ENCODE measurements at regions of chr17 and their contacts with region 1.

Region 1: DNA sequence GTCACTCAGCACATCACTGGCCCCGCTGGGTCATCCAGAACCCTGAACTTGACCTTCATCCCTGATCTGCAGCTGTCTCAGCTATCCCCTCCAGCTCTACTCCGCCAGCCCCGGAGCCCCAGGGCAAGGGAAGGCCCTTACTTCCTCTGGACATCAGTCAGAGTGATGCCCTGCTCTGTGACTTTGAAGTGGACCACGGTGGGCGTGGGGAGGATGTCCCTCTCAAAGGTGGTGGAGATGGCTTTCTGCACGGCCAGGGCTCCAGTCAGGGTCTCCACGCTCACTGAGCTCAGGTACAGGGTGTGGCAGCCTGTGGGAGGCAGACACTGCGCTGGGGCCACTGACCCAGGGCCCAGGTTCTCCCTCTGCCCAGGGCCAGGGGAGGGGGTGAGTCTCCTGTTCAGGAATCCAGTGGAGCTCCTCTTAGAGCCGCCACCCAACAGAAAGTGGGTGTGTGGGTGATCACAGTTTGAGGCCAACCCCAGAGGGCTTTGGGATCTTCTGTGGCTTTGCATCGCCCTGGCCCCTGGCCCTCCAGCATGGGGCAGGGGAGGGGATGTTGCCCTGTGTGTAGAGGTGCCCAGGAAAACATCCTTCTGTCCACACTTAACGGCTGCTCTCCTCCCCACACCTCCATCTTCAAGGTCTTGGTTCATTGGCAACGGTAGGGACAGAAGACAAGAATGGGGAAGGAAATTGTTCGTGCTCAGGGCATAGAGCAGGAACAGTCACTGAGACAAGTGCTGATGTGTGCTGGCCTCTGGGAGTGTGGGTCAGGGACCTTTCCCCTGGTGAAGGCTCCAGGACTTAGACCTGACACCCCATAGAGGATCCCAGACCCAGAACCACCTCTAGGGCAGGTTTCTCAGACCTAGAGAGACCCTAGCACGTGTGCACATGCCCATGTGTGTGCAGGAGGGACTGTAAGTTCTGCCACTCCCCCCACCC is 21.6 kb downstream of the TNS4 start:
- DNase-seq: no peak
- ATAC-seq: no peak
- H3K4me3 ChIP-seq: no peak overlapping the region
- H3K27ac ChIP-seq: no peak overlapping the region
- H3K4me1 ChIP-seq: peaks cover 0 to 10% of the 10 kb centered on the region in 2 donors
- H3K27me3 ChIP-seq: no peaks in the 10 kb centered on the region
- CTCF ChIP-seq: no peak
- POLR2A ChIP-seq: no peak

Region 2: GRCh38 chr17:40362696-40363110 is 117.1 kb before region 1 on chr17:
- in situ Hi-C with region 1: no loop called
- intact Hi-C with region 1: no loop called
- DNase-seq: no peak
- ATAC-seq: peak; percentile 20 to 23
- H3K4me3 ChIP-seq: peak overlapping the region; percentile 56 to 70 (median 62)
- H3K27ac ChIP-seq: no peak overlapping the region
- H3K4me1 ChIP-seq: peaks cover 6% of the 10 kb centered on the region in 2 donors
- H3K27me3 ChIP-seq: no peaks in the 10 kb centered on the region
- CTCF ChIP-seq: peak in 4 of 5 experiments; percentile 25 to 52 (median 46)
- POLR2A ChIP-seq: no peak

Region 3: DNA sequence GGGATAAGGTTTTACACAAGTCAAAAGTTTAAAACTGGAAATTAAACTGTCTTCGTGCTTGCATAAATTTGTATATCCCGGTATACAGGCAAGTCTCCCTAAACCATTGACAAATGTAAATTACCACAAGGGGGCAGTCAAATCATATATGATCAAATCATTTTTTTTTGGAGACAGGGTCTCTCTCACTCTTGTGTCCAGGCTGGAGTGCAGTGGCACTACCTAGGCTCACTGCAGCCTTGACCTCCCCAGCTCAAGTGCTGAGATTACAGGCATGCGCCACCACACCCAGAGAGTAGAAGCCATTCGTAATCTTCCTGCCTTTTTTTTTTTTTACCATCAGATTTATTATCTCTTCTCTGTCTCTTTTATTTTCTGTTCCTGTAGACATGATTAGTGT is 80.6 kb before region 1 on chr17:
- in situ Hi-C with region 1: no loop called
- intact Hi-C with region 1: loop called (anchors 2 kb)
- DNase-seq: no peak
- ATAC-seq: peak in 1 of 2 donors; percentile 74
- H3K4me3 ChIP-seq: no peak overlapping the region
- H3K27ac ChIP-seq: no peak overlapping the region
- H3K4me1 ChIP-seq: no peaks in the 10 kb centered on the region
- H3K27me3 ChIP-seq: no peaks in the 10 kb centered on the region
- CTCF ChIP-seq: peak; percentile 47 to 71 (median 56)
- POLR2A ChIP-seq: no peak

Region 4: GRCh38 chr17:40956401-40957254 is 476.8 kb after region 1 on chr17:
- in situ Hi-C with region 1: no loop called
- intact Hi-C with region 1: no loop called
- DNase-seq: no peak
- ATAC-seq: no peak
- H3K4me3 ChIP-seq: no peak overlapping the region
- H3K27ac ChIP-seq: no peak overlapping the region
- H3K4me1 ChIP-seq: peaks cover 10 to 13% of the 10 kb centered on the region in 2 donors
- H3K27me3 ChIP-seq: no peaks in the 10 kb centered on the region
- CTCF ChIP-seq: no peak
- POLR2A ChIP-seq: no peak

Measured in gastrocnemius medialis (tissue), 4 donors.